ENCODE measurements at regions of chr1 and their contacts with region 1.

Region 1: GRCh38 chr1:222455188-222455879 is 92.6 kb downstream of the HHIPL2 start:
- DNase-seq: peak; percentile 82 to 83
- ATAC-seq: peak; percentile 91 to 97 (median 96)
- H3K4me3 ChIP-seq: peak overlapping the region in 2 of 10 donors; percentile 12 to 31
- H3K27ac ChIP-seq: peak overlapping the region in 3 of 10 donors; percentile 36 to 58 (median 48)
- H3K4me1 ChIP-seq: peaks cover 0 to 13% (median 10%) of the 10 kb centered on the region in 9 donors
- H3K27me3 ChIP-seq: no peaks in the 10 kb centered on the region
- CTCF ChIP-seq: peak; percentile 76 to 97 (median 95)

Region 2: DNA sequence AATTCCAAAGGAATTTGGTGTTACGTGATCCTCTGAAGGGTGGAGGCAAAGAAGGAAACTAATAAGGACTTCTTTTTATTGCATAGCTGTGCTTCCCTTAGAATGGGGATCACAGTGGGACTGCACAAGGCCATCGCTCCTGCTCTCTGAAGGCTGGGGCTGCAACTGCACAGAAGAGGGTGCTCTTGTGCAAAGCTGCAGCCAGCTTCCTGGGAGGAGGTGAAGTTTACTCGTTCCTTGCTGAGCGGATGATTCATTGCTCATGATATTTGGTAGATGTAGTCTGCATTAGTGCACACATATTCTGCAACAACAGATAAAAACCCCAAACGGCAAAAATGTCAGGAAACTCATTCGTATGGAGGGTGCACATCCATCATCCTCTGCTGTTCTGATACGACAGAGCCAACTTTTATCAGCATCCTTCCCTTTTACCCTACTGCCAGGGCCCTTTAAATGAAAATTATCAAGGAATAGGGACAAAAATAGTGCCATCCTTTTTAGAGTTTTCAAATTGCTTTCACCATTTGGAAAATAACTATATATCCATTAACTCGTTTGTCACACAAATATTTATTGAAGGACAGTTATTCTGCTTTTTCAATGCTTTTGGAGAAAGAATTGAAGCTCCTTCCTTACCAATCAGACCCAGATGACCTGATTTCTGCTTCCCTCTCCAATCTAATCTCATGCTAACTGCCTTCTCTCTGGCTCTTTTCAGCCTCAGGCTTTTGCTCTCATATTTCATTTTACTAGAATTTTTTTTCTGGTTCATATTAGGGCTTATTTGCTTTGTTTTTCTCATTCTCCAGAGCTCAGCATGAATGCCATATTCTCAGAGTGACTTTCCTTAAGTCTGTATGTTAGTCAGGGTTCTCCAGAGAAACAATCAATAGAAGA is 977.0 kb before region 1 on chr1:
- intact Hi-C with region 1: loop called in 6 of 10 experiments (anchors 1 to 10 kb)
- DNase-seq: peak; percentile 18 to 37
- ATAC-seq: peak; percentile 61 to 93 (median 77)
- H3K4me3 ChIP-seq: no peak overlapping the region
- H3K27ac ChIP-seq: no peak overlapping the region
- H3K4me1 ChIP-seq: peaks cover 0 to 7% (median 0%) of the 10 kb centered on the region in 9 donors
- H3K27me3 ChIP-seq: peaks cover 0 to 37% (median 14%) of the 10 kb centered on the region in 7 donors
- CTCF ChIP-seq: peak in 8 of 9 donors; percentile 15 to 73 (median 62)

Region 3: GRCh38 chr1:221487781-221488524 is 967.4 kb before region 1 on chr1:
- intact Hi-C with region 1: loop called in 1 of 10 experiments (anchors 10 kb)
- DNase-seq: no peak
- ATAC-seq: no peak
- H3K4me3 ChIP-seq: no peak overlapping the region
- H3K27ac ChIP-seq: no peak overlapping the region
- H3K4me1 ChIP-seq: no peaks in the 10 kb centered on the region
- H3K27me3 ChIP-seq: peaks cover 0 to 10% (median 0%) of the 10 kb centered on the region in 7 donors
- CTCF ChIP-seq: no peak

Region 4: GRCh38 chr1:221543529-221544120 is 911.7 kb before region 1 on chr1:
- intact Hi-C with region 1: loop called in 4 of 10 experiments (anchors 5 to 10 kb)
- DNase-seq: no peak
- ATAC-seq: peak in 3 of 8 donors; percentile 22 to 61 (median 37)
- H3K4me3 ChIP-seq: no peak overlapping the region
- H3K27ac ChIP-seq: no peak overlapping the region
- H3K4me1 ChIP-seq: no peaks in the 10 kb centered on the region
- H3K27me3 ChIP-seq: peaks cover 0 to 3% (median 0%) of the 10 kb centered on the region in 7 donors
- CTCF ChIP-seq: peak; percentile 11 to 69 (median 60)

Region 5: DNA sequence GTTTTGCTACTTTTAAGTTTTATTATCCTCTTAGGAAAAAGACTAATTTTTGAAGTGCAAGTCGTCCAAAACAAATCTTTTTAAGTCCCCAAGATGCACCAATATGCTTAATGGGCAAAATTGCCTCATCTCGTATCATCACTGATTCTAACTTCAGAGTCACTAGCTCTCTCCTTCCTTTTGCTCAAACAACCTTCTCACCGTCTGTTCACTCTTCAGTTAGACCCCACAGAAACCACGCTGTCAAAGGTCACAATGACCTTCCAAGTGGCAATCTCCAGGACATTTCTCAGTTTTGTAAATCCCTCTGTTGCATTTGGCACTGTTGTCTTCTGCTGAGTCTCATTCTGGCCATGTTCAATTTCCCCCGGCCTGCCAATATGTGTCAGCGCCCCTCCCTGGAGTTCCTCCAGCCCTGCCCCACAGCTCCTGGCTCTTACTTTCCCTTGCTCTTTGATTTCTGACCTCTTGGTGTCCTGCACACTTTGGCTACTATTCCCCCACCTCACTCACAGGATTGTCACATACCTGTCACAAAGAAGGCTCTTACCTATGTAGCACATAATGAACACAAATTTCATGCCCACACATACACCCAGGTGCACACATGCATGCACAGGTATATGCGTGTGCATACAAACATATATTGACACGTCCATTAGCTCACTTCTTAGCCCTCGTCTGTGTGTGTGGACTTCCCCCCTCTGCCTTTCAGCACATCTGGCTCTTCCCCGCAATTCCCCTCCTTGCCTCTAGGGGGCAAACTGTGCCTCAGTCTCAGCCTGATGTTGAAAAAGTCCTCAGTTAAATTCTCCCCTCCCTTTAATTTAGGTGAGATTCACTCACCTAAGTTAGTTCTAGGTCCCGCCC is 359.5 kb before region 1 on chr1:
- intact Hi-C with region 1: loop called in 7 of 10 experiments (anchors 1 to 10 kb)
- DNase-seq: peak in 1 of 2 donors; percentile 19
- ATAC-seq: peak in 1 of 8 donors; percentile 42
- H3K4me3 ChIP-seq: no peak overlapping the region
- H3K27ac ChIP-seq: no peak overlapping the region
- H3K4me1 ChIP-seq: peaks cover 0 to 15% (median 0%) of the 10 kb centered on the region in 9 donors
- H3K27me3 ChIP-seq: peaks cover 0 to 6% (median 0%) of the 10 kb centered on the region in 7 donors
- CTCF ChIP-seq: peak; percentile 51 to 94 (median 78)

Region 6: DNA sequence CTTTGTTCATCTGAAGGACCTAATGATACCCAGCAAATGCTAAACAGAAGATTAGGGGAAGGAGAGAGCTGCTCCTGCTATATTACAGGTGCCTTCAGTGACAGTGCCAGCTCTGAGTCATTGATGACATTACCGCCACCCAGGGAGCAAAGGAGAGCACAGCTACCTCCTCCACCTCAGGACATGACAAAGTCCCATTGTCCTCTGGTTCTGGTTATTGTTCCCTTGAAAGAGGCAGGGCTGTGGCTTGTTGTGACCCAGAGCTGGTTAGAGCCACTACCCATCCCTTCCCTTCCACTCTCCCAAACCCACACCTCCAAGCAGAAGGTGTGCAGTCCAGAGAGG is 350.0 kb before region 1 on chr1:
- intact Hi-C with region 1: loop called in 1 of 10 experiments (anchors 10 kb)
- DNase-seq: no peak
- ATAC-seq: peak in 6 of 8 donors; percentile 42 to 83 (median 64)
- H3K4me3 ChIP-seq: no peak overlapping the region
- H3K27ac ChIP-seq: no peak overlapping the region
- H3K4me1 ChIP-seq: peaks cover 0 to 9% (median 0%) of the 10 kb centered on the region in 9 donors
- H3K27me3 ChIP-seq: peaks cover 0 to 13% (median 0%) of the 10 kb centered on the region in 7 donors
- CTCF ChIP-seq: peak in 1 of 9 donors; percentile 20

Region 7: DNA sequence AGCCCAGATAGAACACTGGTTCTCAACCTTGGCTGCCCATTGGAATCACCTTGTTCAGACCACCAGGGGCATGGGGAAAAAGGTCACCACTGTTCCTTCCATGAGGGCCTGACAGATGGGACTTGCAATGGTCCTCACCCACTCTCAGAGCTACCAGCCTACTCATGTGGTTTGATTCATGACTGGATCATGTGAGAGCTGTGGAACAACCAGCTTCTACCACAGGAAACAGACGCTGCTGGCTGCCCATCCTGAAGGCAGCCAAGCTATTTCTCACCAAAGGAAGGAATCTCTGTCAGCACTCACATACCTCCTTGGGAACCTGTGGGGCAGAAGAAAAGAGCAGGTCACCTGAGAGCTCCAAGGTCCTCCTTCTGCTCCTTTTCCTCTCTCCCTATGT is 1156.6 kb after region 1 on chr1:
- intact Hi-C with region 1: no loop called
- DNase-seq: no peak
- ATAC-seq: no peak
- H3K4me3 ChIP-seq: no peak overlapping the region
- H3K27ac ChIP-seq: no peak overlapping the region
- H3K4me1 ChIP-seq: no peaks in the 10 kb centered on the region
- H3K27me3 ChIP-seq: no peaks in the 10 kb centered on the region
- CTCF ChIP-seq: no peak

Measured in heart right ventricle (tissue), 16 donors.